Naive thymus-derived CD4-positive, alpha-beta T cell (primary cell): ENCODE measurements at regions of chr2 and their contacts with region 1.

Region 1: DNA sequence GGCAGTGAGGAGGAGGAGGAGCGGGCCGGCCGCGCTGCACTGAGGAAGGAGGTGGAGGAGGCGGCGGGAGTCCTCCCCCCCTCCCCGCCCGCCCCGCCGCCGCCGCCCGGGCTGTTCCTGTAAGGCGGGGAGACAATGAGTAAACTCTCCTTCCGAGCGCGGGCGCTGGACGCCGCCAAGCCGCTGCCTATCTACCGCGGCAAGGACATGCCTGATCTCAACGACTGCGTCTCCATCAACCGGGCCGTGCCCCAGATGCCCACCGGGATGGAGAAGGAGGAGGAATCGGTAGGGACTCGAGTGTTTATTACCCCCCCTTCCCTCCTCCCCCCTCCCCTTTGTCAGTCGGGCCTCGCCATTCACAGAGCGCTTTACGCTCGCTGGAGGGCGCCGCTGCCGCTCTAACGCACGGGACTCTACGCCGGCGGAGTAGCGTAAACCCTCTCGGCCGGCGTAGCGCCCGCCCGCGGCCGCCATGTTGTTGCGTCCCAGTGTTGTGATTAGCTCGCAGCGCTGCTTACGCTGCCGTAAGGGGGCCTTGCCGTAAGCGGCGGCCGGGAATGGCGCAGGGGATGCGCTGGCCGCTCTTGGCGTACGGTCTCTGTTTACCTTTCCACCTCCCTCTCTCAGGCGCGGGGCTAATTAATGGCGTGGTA is 460 bp downstream of the EPC2 start:
- DNase-seq: peak; percentile 90 to 99 (median 95)
- ATAC-seq: peak; percentile 84
- H3K4me3 ChIP-seq: peak overlapping the region; percentile 69
- H3K4me3 Mint-ChIP-seq: peak overlapping the region; percentile 79 to 99 (median 96)
- H3K27ac ChIP-seq: peak overlapping the region; percentile 94
- H3K27ac Mint-ChIP-seq: peak overlapping the region; percentile 81 to 99 (median 97)
- H3K4me1 ChIP-seq: peaks cover 21 to 22% of the 10 kb centered on the region in 2 donors
- H3K4me1 Mint-ChIP-seq: peaks cover 32 to 48% (median 37%) of the 10 kb centered on the region in 7 donors
- H3K27me3 ChIP-seq: no peaks in the 10 kb centered on the region
- H3K27me3 Mint-ChIP-seq: peaks cover 0 to 12% (median 0%) of the 10 kb centered on the region in 5 donors

Region 2: GRCh38 chr2:147989809-147990403 is 655.1 kb before region 1 on chr2:
- CTCF ChIA-PET with region 1: interaction called, 3 read pairs
- POLR2A ChIA-PET with region 1: no interaction called
- intact Hi-C with region 1: loop called in 1 of 2 experiments (anchors 1 kb)
- DNase-seq: peak in 7 of 9 donors; percentile 37 to 70 (median 52)
- ATAC-seq: peak; percentile 87
- H3K4me3 ChIP-seq: no peak overlapping the region
- H3K4me3 Mint-ChIP-seq: no peak overlapping the region
- H3K27ac ChIP-seq: no peak overlapping the region
- H3K27ac Mint-ChIP-seq: peak overlapping the region in 7 of 9 donors; percentile 11 to 84 (median 28)
- H3K4me1 ChIP-seq: no peaks in the 10 kb centered on the region
- H3K4me1 Mint-ChIP-seq: peaks cover 6 to 50% (median 42%) of the 10 kb centered on the region in 7 donors
- H3K27me3 ChIP-seq: no peaks in the 10 kb centered on the region
- H3K27me3 Mint-ChIP-seq: no peaks in the 10 kb centered on the region

Region 3: GRCh38 chr2:148545390-148546256 is 99.4 kb before region 1 on chr2:
- CTCF ChIA-PET with region 1: no interaction called
- POLR2A ChIA-PET with region 1: interaction called, 25 read pairs
- intact Hi-C with region 1: loop called in 1 of 2 experiments (anchors 1 kb)
- DNase-seq: peak in 1 of 9 donors; percentile 36
- ATAC-seq: peak; percentile 75
- H3K4me3 ChIP-seq: no peak overlapping the region
- H3K4me3 Mint-ChIP-seq: peak overlapping the region in 3 of 10 donors; percentile 32 to 58 (median 46)
- H3K27ac ChIP-seq: no peak overlapping the region
- H3K27ac Mint-ChIP-seq: peak overlapping the region in 4 of 9 donors; percentile 13 to 88 (median 44)
- H3K4me1 ChIP-seq: peaks cover 5 to 36% of the 10 kb centered on the region in 2 donors
- H3K4me1 Mint-ChIP-seq: peaks cover 22 to 70% (median 54%) of the 10 kb centered on the region in 7 donors
- H3K27me3 ChIP-seq: no peaks in the 10 kb centered on the region
- H3K27me3 Mint-ChIP-seq: peaks cover 0 to 2% (median 0%) of the 10 kb centered on the region in 5 donors

Region 4: GRCh38 chr2:148658807-148659722 is 14.1 kb after region 1 on chr2:
- CTCF ChIA-PET with region 1: interaction called, 4 read pairs
- POLR2A ChIA-PET with region 1: interaction called, 21 read pairs
- intact Hi-C with region 1: loop called (anchors 1 kb)
- DNase-seq: peak in 6 of 9 donors; percentile 12 to 41 (median 28)
- ATAC-seq: peak; percentile 81
- H3K4me3 ChIP-seq: no peak overlapping the region
- H3K4me3 Mint-ChIP-seq: peak overlapping the region; percentile 21 to 81 (median 64)
- H3K27ac ChIP-seq: peak overlapping the region; percentile 5
- H3K27ac Mint-ChIP-seq: peak overlapping the region; percentile 65 to 93 (median 80)
- H3K4me1 ChIP-seq: peaks cover 47 to 48% of the 10 kb centered on the region in 2 donors
- H3K4me1 Mint-ChIP-seq: peaks cover 50 to 93% (median 82%) of the 10 kb centered on the region in 7 donors
- H3K27me3 ChIP-seq: no peaks in the 10 kb centered on the region
- H3K27me3 Mint-ChIP-seq: no peaks in the 10 kb centered on the region

Region 5: DNA sequence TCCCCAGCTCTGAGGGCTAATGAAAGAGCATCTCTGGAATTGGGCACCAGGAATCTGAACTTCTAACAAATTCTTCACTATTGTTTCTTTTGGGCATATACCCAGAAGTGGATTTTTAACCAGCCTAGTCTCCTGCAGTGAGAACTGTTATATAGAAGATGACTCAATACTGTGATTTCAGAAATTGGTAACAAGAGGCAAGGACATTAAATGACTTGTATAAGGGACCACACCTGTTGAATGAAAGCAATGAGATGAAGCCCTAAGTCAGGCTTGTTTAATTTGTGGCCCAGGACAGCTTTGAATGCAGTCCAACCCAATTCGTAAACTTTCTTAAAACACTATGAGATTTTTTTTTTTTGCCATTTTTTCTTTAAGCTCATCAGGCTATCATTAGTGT is 57.5 kb after region 1 on chr2:
- CTCF ChIA-PET with region 1: no interaction called
- POLR2A ChIA-PET with region 1: no interaction called
- intact Hi-C with region 1: no loop called
- DNase-seq: no peak
- ATAC-seq: no peak
- H3K4me3 ChIP-seq: no peak overlapping the region
- H3K4me3 Mint-ChIP-seq: peak overlapping the region in 1 of 10 donors; percentile 2
- H3K27ac ChIP-seq: no peak overlapping the region
- H3K27ac Mint-ChIP-seq: peak overlapping the region in 1 of 9 donors; percentile 32
- H3K4me1 ChIP-seq: no peaks in the 10 kb centered on the region
- H3K4me1 Mint-ChIP-seq: peaks cover 3 to 48% (median 39%) of the 10 kb centered on the region in 7 donors
- H3K27me3 ChIP-seq: no peaks in the 10 kb centered on the region
- H3K27me3 Mint-ChIP-seq: no peaks in the 10 kb centered on the region

Region 6: DNA sequence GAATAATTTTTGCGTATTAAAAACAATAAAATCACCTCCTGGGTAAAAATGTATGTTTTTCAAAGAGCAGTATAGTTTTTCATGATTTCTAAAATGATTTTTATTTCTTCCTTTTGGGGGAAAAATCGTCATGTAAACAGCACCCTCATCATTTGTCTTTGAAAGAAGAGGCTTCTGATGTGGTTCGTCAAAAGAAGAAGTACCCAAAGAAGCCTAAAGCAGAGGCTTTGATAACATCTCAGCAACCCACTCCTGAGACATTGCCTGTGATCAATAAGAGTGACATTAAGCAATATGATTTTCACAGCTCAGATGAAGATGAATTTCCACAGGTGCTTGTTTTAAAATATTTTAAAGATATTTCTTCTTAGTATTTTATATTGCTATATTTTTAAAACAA is 119.8 kb after region 1 on chr2:
- CTCF ChIA-PET with region 1: no interaction called
- POLR2A ChIA-PET with region 1: no interaction called
- intact Hi-C with region 1: loop called in 1 of 2 experiments (anchors 1 kb)
- DNase-seq: peak in 7 of 9 donors; percentile 33 to 64 (median 47)
- ATAC-seq: peak; percentile 92
- H3K4me3 ChIP-seq: no peak overlapping the region
- H3K4me3 Mint-ChIP-seq: peak overlapping the region in 7 of 10 donors; percentile 37 to 73 (median 64)
- H3K27ac ChIP-seq: no peak overlapping the region
- H3K27ac Mint-ChIP-seq: peak overlapping the region in 5 of 9 donors; percentile 26 to 72 (median 57)
- H3K4me1 ChIP-seq: peaks cover 0 to 12% of the 10 kb centered on the region in 2 donors
- H3K4me1 Mint-ChIP-seq: peaks cover 6 to 70% (median 53%) of the 10 kb centered on the region in 7 donors
- H3K27me3 ChIP-seq: no peaks in the 10 kb centered on the region
- H3K27me3 Mint-ChIP-seq: no peaks in the 10 kb centered on the region

Region 7: DNA sequence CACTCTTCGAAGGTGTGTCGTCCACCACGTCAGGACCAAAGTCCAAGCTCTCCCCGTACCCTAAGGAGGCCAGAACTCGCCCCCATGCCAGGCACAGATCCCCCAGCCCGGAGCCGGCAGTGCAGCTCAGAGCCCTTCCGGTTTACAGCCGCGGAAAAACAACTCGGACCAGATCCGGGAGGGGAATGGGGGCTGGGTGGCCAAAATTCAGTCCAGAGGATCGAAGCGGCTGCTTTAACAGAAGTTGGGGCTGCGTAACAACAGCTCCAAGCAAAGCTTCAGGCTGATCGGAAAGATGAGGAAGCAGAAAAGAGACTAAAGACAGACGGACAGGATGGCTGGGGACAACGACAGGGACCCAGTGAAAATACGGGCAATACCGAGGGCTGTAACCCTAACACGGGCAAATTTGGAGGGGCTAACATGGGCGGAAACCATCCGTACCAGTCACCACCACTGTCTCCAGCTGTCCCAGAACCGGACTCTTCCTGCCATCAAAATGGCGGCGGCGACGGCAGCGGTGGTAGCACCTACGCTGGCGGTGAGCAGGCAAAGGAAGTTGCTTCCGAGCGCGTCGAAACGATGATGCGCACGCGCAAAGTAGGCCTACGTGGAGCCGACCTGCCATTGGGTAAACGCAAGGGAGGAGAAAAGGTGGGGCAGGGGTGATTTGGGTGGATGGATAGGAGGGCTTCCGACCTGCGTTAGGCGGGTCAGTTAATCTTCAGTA is 942.4 kb after region 1 on chr2 and contains the start of gene MMADHC:
- CTCF ChIA-PET with region 1: no interaction called
- POLR2A ChIA-PET with region 1: interaction called, 3 read pairs
- intact Hi-C with region 1: loop called in 1 of 2 experiments (anchors 1 kb)
- DNase-seq: peak; percentile 83 to 93 (median 91)
- ATAC-seq: peak; percentile 98
- H3K4me3 ChIP-seq: peak within 1 kb of the TSS; percentile 97
- H3K4me3 Mint-ChIP-seq: peak within 1 kb of the TSS; percentile 95 to 99 (median 97)
- H3K27ac ChIP-seq: peak within 1 kb of the TSS; percentile 93
- H3K27ac Mint-ChIP-seq: peak within 1 kb of the TSS; percentile 95 to 100 (median 99)
- H3K4me1 ChIP-seq: peaks cover 23 to 39% of the 10 kb centered on the region in 2 donors
- H3K4me1 Mint-ChIP-seq: peaks cover 27 to 58% (median 50%) of the 10 kb centered on the region in 7 donors
- H3K27me3 ChIP-seq: no peaks in the 10 kb centered on the region
- H3K27me3 Mint-ChIP-seq: peaks cover 22 to 30% (median 30%) of the 10 kb centered on the region in 5 donors
- total RNA-seq, gene MMADHC: 53.3 to 93.4 (median 66.6) TPM